Sciatic nerve (tissue), 2 donors: ENCODE measurements at regions of chr7 and their contacts with region 1.

Region 1: GRCh38 chr7:47428092-47428767 is 153.7 kb downstream of the TNS3 start:
- DNase-seq: peak; percentile 52
- ATAC-seq: peak; percentile 40

Region 2: GRCh38 chr7:47273974-47274766 is 154.1 kb before region 1 on chr7:
- intact Hi-C with region 1: loop called (anchors 10 kb)
- DNase-seq: peak; percentile 36
- ATAC-seq: no peak